ENCODE measurements at regions of chr19 and their contacts with region 1.

Region 1: GRCh38 chr19:46600384-46601317 is 479 bp upstream of the CALM3 start:
- DNase-seq: peak; percentile 97
- H3K4me3 Mint-ChIP-seq: peak overlapping the region; percentile 96
- H3K27ac Mint-ChIP-seq: peak overlapping the region; percentile 100
- H3K4me1 Mint-ChIP-seq: peaks cover 32% of the 10 kb centered on the region
- H3K27me3 Mint-ChIP-seq: no peaks in the 10 kb centered on the region

Region 2: GRCh38 chr19:46520616-46521015 is 80.0 kb before region 1 on chr19:
- CTCF ChIA-PET with region 1: interaction called, 5 read pairs
- intact Hi-C with region 1: loop called (anchors 2 kb)
- DNase-seq: peak; percentile 28
- H3K4me3 Mint-ChIP-seq: no peak overlapping the region
- H3K27ac Mint-ChIP-seq: peak overlapping the region; percentile 5
- H3K4me1 Mint-ChIP-seq: peaks cover 62% of the 10 kb centered on the region
- H3K27me3 Mint-ChIP-seq: no peaks in the 10 kb centered on the region

Region 3: GRCh38 chr19:46634045-46634655 is 33.5 kb after region 1 on chr19:
- CTCF ChIA-PET with region 1: interaction called, 3 read pairs
- intact Hi-C with region 1: loop called (anchors 1 kb)
- DNase-seq: peak; percentile 99
- H3K4me3 Mint-ChIP-seq: peak overlapping the region; percentile 74
- H3K27ac Mint-ChIP-seq: peak overlapping the region; percentile 54
- H3K4me1 Mint-ChIP-seq: peaks cover 21% of the 10 kb centered on the region
- H3K27me3 Mint-ChIP-seq: no peaks in the 10 kb centered on the region

Region 4: DNA sequence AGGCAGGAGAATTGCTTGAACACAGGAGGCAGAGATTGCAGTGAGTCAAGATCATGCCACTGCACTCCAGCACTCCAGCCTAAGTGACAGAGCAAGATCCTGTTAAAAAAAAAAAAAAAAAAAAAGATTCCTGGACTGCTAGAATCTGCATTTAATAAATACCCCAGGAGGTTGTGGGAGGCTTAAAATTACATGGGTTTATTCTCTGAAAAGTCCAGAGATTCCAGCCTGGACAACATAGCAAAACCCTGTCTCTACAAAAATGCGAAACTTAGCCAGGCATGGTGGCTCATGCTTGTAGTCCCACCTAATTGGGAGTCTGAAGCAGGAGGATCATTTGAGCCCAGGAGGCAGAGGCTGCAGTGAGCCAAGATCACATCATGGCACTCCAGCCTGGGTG is 197.2 kb after region 1 on chr19:
- CTCF ChIA-PET with region 1: no interaction called
- intact Hi-C with region 1: no loop called
- DNase-seq: no peak
- H3K4me3 Mint-ChIP-seq: no peak overlapping the region
- H3K27ac Mint-ChIP-seq: no peak overlapping the region
- H3K4me1 Mint-ChIP-seq: no peaks in the 10 kb centered on the region
- H3K27me3 Mint-ChIP-seq: no peaks in the 10 kb centered on the region

Region 5: DNA sequence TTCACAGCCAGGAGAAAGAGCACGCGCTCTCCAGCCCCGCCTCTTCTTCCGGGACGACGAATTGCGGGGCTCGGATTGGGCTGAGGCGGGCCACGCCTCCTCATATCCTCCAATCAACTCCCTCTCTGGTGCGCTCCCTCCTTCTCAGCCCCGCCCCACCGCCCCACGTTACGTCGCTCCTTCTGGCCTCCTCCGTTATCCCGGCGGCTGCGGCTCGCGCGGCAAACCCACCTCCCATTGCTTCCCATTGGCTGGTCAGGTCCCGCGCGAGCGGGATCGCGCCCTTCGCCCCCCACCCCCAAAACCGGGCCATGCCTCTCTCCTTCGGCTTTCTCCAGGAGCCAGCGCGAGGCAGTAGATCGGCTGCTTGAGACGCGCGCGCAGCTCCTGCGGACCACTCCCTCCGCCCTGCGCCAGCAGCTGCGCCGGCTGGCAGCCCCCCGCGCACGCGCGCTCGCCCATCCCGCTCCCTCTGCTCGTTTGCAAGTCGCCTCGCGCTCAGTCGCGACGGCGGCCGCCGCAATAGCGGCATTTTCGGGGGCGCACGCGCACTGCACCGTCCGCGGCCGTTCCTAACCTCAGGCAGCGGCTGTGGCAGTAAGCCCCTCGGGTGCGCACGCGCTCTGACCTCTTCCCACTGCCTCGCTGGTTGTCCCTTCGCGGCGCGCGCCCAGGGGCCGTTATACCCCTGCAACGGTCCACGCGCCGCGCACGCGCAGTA is 259.6 kb after region 1 on chr19:
- CTCF ChIA-PET with region 1: no interaction called
- intact Hi-C with region 1: loop called (anchors 2 kb)
- DNase-seq: peak; percentile 97
- H3K4me3 Mint-ChIP-seq: peak overlapping the region; percentile 84
- H3K27ac Mint-ChIP-seq: peak overlapping the region; percentile 87
- H3K4me1 Mint-ChIP-seq: peaks cover 21% of the 10 kb centered on the region
- H3K27me3 Mint-ChIP-seq: no peaks in the 10 kb centered on the region

Region 6: GRCh38 chr19:47901370-47901769 is 1300.7 kb after region 1 on chr19:
- CTCF ChIA-PET with region 1: no interaction called
- intact Hi-C with region 1: no loop called
- DNase-seq: no peak
- H3K4me3 Mint-ChIP-seq: no peak overlapping the region
- H3K27ac Mint-ChIP-seq: no peak overlapping the region
- H3K4me1 Mint-ChIP-seq: no peaks in the 10 kb centered on the region
- H3K27me3 Mint-ChIP-seq: peaks cover 4% of the 10 kb centered on the region

Measured in activated naive CD4-positive, alpha-beta T cell treated with anti-CD3 and anti-CD28 coated beads for 36 hours (primary cell).